ENCODE measurements at regions of chr2 and their contacts with region 1.

Region 1: GRCh38 chr2:223837287-223838061 is at the start of gene AP1S3:
- DNase-seq: peak; percentile 88 to 97
- H3K4me3 ChIP-seq: peak within 1 kb of the TSS; percentile 89
- H3K27ac ChIP-seq: peak within 1 kb of the TSS; percentile 80
- H3K4me1 ChIP-seq: peaks cover 33% of the 10 kb centered on the region
- H3K27me3 ChIP-seq: no peaks in the 10 kb centered on the region
- CTCF ChIP-seq: no peak; the same call in 1 of the 2 replicates
- total RNA-seq, gene AP1S3: 61.3 and 73.3 TPM in 2 replicates

Region 2: GRCh38 chr2:223414646-223415045 is 422.8 kb before region 1 on chr2:
- CTCF ChIA-PET with region 1: no interaction called
- POLR2A ChIA-PET with region 1: no interaction called
- intact Hi-C with region 1: no loop called
- DNase-seq: no peak
- H3K4me3 ChIP-seq: no peak overlapping the region
- H3K27ac ChIP-seq: no peak overlapping the region
- H3K4me1 ChIP-seq: no peaks in the 10 kb centered on the region
- H3K27me3 ChIP-seq: no peaks in the 10 kb centered on the region
- CTCF ChIP-seq: no peak

Region 3: GRCh38 chr2:223692191-223692947 is 145.1 kb before region 1 on chr2:
- CTCF ChIA-PET with region 1: no interaction called
- POLR2A ChIA-PET with region 1: no interaction called
- intact Hi-C with region 1: loop called (anchors 5 kb)
- DNase-seq: peak in 1 of 2 experiments; percentile 60
- H3K4me3 ChIP-seq: no peak overlapping the region
- H3K27ac ChIP-seq: no peak overlapping the region
- H3K4me1 ChIP-seq: peaks cover 15% of the 10 kb centered on the region
- H3K27me3 ChIP-seq: no peaks in the 10 kb centered on the region
- CTCF ChIP-seq: peak; percentile 79

Region 4: GRCh38 chr2:223760838-223761502 is 76.5 kb before region 1 on chr2:
- CTCF ChIA-PET with region 1: no interaction called
- POLR2A ChIA-PET with region 1: no interaction called
- intact Hi-C with region 1: loop called (anchors 1 kb)
- DNase-seq: peak; percentile 91 to 99
- H3K4me3 ChIP-seq: peak overlapping the region; percentile 42; the same call in 1 of the 2 replicates
- H3K27ac ChIP-seq: peak overlapping the region; percentile 96
- H3K4me1 ChIP-seq: peaks cover 42% of the 10 kb centered on the region
- H3K27me3 ChIP-seq: no peaks in the 10 kb centered on the region
- CTCF ChIP-seq: peak; percentile 60

Region 5: DNA sequence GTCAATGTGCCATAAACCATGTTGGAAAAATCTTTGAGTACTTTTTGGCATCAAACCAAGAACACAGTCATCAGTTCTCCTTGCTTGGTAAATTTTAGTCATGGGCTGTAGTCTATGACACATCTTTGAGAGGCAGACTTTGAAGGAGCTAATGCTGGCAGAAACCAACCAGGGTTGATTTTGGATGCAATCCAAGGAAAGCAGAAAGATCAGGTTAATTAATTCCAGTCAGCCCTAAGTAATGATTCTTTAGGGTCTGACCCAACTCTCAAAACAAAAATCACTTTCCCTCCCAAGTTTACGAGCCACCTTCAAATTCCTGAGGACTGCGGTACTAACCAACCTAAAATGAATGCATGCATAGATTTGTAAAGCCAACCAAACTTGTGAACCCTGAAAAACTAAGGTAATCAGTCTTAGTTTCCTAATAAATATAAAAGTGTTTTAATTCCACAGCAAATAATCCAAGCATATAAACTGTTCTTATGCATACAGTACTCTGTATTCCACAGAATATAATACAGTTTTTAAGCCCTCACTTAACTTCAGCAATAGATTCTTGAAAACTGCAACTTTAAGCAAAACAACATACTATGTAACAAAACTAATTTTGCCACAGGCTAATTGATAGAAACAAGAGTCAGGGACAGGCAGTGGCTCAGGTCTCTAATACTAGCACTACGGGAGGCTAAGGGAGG is 22.1 kb before region 1 on chr2:
- CTCF ChIA-PET with region 1: interaction called, 6 read pairs
- POLR2A ChIA-PET with region 1: interaction called, 7 read pairs
- intact Hi-C with region 1: loop called (anchors 1 kb)
- DNase-seq: peak; percentile 75 to 100
- H3K4me3 ChIP-seq: peak overlapping the region; percentile 0; the same call in 1 of the 2 replicates
- H3K27ac ChIP-seq: peak overlapping the region; percentile 79
- H3K4me1 ChIP-seq: peaks cover 62% of the 10 kb centered on the region
- H3K27me3 ChIP-seq: no peaks in the 10 kb centered on the region
- CTCF ChIP-seq: no peak

Region 6: DNA sequence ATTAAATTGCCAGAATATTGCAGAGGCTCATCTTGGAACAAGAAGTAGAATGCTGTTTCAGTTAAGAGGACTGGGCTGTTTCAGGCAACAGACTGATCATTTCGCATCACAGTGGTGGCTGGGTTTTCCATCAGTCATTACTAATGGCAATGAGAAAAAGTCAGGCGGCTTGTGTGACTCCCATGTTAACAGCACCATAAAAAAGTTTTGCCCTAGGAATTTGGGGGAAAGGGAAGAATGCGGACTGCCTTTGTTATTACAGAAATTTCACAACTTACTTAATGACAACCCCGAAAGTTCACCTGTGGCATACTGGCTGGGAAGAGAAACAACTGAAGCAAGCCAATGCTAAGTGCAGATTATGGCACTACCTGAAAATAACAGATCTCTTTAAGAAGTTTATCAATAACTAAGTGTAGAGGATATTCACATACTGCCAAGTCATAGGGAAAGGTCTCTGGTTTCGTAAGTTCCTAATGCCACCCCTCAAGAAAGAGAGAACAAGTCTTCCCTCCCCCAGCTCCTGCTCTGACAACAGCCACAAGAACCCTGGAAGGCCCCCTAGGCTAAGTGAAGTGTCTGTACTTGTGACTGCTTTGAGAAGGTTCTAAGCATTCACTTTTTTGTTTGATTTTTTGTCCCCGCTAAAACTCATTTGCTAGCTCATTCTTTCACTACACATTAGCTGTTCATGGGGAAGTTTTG is 40.4 kb after region 1 on chr2:
- CTCF ChIA-PET with region 1: no interaction called
- POLR2A ChIA-PET with region 1: interaction called, 14 read pairs
- intact Hi-C with region 1: no loop called
- DNase-seq: peak in 1 of 2 experiments; percentile 94
- H3K4me3 ChIP-seq: peak overlapping the region; percentile 3; the same call in 1 of the 2 replicates
- H3K27ac ChIP-seq: peak overlapping the region; percentile 72
- H3K4me1 ChIP-seq: peaks cover 26% of the 10 kb centered on the region
- H3K27me3 ChIP-seq: no peaks in the 10 kb centered on the region
- CTCF ChIP-seq: no peak

Region 7: DNA sequence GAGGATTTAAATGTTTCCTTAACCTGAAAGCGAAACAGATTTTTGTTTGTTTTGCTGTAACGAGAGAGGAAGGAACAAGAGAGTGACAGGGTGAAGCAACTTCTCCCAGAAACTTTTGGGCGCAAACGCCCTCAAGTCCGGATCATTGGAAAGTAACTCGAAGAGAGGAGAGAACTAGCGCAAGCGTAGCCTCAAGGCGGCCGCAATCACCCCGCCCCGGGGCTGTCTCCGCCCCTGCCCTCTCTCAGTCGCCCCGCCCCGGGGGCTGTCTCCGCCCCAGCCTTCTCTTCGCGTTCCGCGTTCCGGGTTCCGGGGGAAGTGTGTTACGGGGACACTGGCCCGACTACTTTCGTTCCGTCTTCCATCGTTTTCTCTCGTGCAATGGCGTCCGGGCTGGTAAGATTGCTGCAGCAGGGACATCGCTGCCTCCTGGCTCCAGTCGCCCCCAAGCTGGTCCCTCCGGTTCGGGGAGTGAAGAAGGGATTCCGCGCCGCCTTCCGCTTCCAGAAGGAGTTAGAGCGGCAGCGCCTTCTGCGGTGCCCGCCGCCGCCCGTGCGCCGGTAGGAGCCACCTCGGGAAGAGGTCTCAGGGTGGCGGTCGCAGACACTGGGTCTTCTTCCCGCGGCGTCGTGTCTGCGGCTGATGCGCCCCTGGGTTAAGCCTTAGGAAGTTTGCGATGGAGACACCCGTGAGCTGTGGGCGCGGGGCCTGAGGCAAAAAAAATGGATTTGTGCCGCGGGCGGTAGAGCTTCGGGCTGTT is 119.8 kb after region 1 on chr2 and contains the start of gene MRPL44:
- CTCF ChIA-PET with region 1: interaction called, 3 read pairs
- POLR2A ChIA-PET with region 1: no interaction called
- intact Hi-C with region 1: loop called (anchors 1 kb)
- DNase-seq: peak; percentile 92 to 100
- H3K4me3 ChIP-seq: peak within 1 kb of the TSS; percentile 81
- H3K27ac ChIP-seq: peak within 1 kb of the TSS; percentile 73
- H3K4me1 ChIP-seq: peaks cover 37% of the 10 kb centered on the region
- H3K27me3 ChIP-seq: no peaks in the 10 kb centered on the region
- CTCF ChIP-seq: 0 out of 2 replicates have a peak, but pooled peaks have one; percentile 7
- total RNA-seq, gene MRPL44: 66.4 and 76.6 TPM in 2 replicates

Region 8: GRCh38 chr2:224039124-224039940 is 201.9 kb after region 1 on chr2 and contains the start of gene SERPINE2:
- CTCF ChIA-PET with region 1: no interaction called
- POLR2A ChIA-PET with region 1: no interaction called
- intact Hi-C with region 1: loop called (anchors 1 kb)
- DNase-seq: peak; percentile 67 to 91
- H3K4me3 ChIP-seq: peak within 1 kb of the TSS; percentile 57
- H3K27ac ChIP-seq: no peak within 1 kb of the TSS
- H3K4me1 ChIP-seq: peaks cover 20% of the 10 kb centered on the region
- H3K27me3 ChIP-seq: no peaks in the 10 kb centered on the region
- CTCF ChIP-seq: peak; percentile 77
- total RNA-seq, gene SERPINE2: 110 and 155 TPM in 2 replicates